ENCODE measurements at regions of chr3 and their contacts with region 1.

Region 1: DNA sequence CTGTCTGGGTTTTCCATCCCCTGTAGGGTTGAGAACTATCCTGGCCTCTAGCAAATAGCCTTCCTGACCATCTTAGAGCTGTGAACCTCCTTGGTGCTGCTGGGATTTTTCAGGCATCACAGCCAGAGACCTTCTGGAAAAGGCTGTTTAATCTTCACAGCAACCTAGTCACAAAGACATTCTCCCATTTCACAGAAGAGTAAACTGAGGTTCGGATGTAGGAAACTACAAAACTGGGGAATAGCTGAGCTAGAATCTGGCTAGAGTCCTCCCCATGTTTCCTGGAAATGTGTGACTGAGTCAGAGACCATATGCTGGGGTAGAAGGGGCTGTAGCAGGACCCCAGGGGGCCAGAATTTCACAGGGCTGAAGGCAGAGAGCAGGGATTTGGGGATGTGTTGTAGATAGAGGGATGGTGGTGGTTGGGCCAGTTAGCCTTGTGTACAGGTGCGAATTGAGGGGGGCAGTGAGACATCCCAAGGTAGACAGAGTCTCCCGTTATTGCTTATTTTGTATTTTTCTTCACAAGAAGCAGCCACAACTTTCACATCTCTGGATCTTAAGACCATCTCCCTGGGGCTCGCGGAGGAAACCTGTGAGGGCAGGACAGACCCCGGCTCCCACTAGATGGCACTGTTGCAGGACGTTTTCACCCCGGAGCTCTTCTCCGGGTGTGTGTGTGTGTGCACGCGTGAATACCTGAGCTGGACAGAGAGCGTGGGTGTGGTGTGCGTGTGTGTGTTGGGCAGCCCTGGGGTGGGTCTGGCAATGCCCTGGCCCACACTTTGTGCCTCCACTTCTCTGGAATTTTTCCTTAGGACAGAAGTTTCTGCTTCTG is 66.9 kb upstream of the PRR23C start:
- DNase-seq: no peak
- ATAC-seq: no peak
- H3K4me3 Mint-ChIP-seq: no peak overlapping the region
- H3K27ac Mint-ChIP-seq: no peak overlapping the region
- H3K4me1 Mint-ChIP-seq: peaks cover 4% of the 10 kb centered on the region
- H3K27me3 Mint-ChIP-seq: peaks cover 8% of the 10 kb centered on the region
- CTCF ChIP-seq: no peak

Region 2: GRCh38 chr3:138686771-138687221 is 424.8 kb before region 1 on chr3:
- CTCF ChIA-PET with region 1: no interaction called
- POLR2A ChIA-PET with region 1: no interaction called
- intact Hi-C with region 1: no loop called
- DNase-seq: no peak
- ATAC-seq: peak; percentile 77
- H3K4me3 Mint-ChIP-seq: peak overlapping the region; percentile 44
- H3K27ac Mint-ChIP-seq: peak overlapping the region; percentile 92
- H3K4me1 Mint-ChIP-seq: peaks cover 38% of the 10 kb centered on the region
- H3K27me3 Mint-ChIP-seq: no peaks in the 10 kb centered on the region
- CTCF ChIP-seq: no peak

Region 3: GRCh38 chr3:139329345-139329850 is 217.8 kb after region 1 on chr3:
- CTCF ChIA-PET with region 1: no interaction called
- POLR2A ChIA-PET with region 1: no interaction called
- intact Hi-C with region 1: loop called (anchors 1 kb)
- DNase-seq: peak; percentile 71
- ATAC-seq: peak; percentile 93
- H3K4me3 Mint-ChIP-seq: peak overlapping the region; percentile 69
- H3K27ac Mint-ChIP-seq: no peak overlapping the region
- H3K4me1 Mint-ChIP-seq: peaks cover 9% of the 10 kb centered on the region
- H3K27me3 Mint-ChIP-seq: peaks cover 26% of the 10 kb centered on the region
- CTCF ChIP-seq: peak; percentile 42

Region 4: DNA sequence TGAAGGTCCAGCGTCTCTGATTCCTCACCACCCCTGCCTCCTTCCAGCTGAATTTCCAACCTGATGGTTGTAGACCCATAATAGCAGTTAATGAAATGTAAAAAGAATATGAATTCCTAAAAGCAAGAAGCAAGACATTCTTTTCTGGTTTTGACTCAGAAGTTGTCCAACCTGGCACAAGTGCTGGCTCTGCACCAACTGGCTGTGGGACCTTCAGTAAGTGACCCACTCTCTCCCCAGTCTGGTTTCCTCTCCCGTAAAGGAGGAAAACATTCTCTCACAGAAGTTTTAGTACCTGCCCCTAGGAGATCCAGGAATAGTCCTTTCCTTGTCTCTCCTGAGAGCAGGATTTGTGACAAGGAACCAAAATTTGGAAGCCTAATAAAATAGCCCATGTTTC is 1329.4 kb after region 1 on chr3:
- CTCF ChIA-PET with region 1: no interaction called
- POLR2A ChIA-PET with region 1: no interaction called
- intact Hi-C with region 1: no loop called
- DNase-seq: no peak
- ATAC-seq: no peak
- H3K4me3 Mint-ChIP-seq: no peak overlapping the region
- H3K27ac Mint-ChIP-seq: no peak overlapping the region
- H3K4me1 Mint-ChIP-seq: no peaks in the 10 kb centered on the region
- H3K27me3 Mint-ChIP-seq: no peaks in the 10 kb centered on the region
- CTCF ChIP-seq: no peak